ENCODE measurements at regions of chr17 and their contacts with region 1.

Region 1: DNA sequence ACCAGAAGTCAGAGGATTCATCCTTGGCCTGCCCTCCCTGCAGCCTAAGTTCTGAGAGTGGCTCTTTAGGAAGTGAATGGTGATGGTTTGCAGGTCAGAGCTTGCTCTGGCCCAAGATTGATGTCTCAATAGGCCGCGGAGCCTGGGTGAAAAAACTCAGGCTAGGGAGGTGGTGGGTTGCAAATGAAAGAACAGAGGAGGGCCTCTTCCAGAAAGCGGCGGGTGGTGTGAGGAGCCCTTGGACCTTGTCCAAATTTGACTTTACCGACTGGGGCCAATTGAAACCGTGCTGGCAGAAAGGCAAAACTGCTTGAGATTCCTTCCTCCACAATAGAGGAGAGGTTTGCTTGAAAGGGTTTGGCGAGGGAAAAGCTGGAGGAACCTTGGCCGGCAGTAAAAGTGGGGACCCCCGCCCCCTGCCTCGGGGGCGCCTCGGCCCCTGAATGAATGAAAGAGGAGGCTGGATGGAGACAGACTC is 331.3 kb downstream of the SEC14L1 start:
- DNase-seq: peak in 1 of 5 donors; percentile 34
- H3K4me3 ChIP-seq: peak overlapping the region; percentile 18 to 48
- H3K4me3 Mint-ChIP-seq: peak overlapping the region; percentile 43 to 91 (median 74)
- H3K27ac ChIP-seq: peak overlapping the region; percentile 51
- H3K27ac Mint-ChIP-seq: peak overlapping the region; percentile 82 to 98 (median 93)
- H3K4me1 ChIP-seq: peaks cover 100% of the 10 kb centered on the region
- H3K4me1 Mint-ChIP-seq: peaks cover 67 to 99% (median 90%) of the 10 kb centered on the region in 4 donors
- H3K27me3 ChIP-seq: no peaks in the 10 kb centered on the region
- H3K27me3 Mint-ChIP-seq: no peaks in the 10 kb centered on the region

Region 2: DNA sequence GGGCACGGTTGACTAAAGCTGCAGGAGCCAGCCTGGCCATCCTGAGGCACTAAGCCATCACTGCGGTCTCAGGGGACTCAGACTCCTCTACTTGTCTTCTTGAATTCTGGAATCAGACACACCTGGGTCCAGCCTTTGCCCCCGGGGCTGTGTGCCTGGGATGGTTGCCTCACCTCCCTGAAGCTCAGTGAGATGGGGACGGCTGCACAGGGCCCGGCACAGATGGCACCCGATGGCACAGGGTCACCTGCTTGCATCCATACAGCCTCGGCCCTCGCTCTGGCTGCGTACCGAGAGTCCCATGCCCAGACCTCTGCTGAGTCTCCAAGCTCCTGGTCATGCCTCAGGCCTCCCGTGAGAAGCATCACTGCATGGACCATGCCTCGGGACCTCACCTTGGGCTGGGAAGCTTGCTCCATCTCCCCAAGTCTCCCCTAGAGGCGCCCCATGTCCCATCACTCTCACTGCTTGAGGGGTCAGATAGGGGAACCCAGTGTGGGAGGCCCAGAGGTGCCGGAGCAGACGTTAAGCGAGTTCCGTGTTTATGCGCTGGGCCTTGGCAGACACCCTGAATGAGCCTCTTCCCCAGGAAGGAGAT is 15.0 kb before region 1 on chr17:
- CTCF ChIA-PET with region 1: interaction called, 6 read pairs
- POLR2A ChIA-PET with region 1: interaction called, 6,031 read pairs
- intact Hi-C with region 1: loop called (anchors 2 kb)
- DNase-seq: peak in 1 of 5 donors; percentile 64
- H3K4me3 ChIP-seq: peak overlapping the region; percentile 73 to 94
- H3K4me3 Mint-ChIP-seq: peak overlapping the region; percentile 90 to 100 (median 96)
- H3K27ac ChIP-seq: peak overlapping the region; percentile 73
- H3K27ac Mint-ChIP-seq: peak overlapping the region; percentile 90 to 100 (median 98)
- H3K4me1 ChIP-seq: peaks cover 74% of the 10 kb centered on the region
- H3K4me1 Mint-ChIP-seq: peaks cover 31 to 92% (median 55%) of the 10 kb centered on the region in 4 donors
- H3K27me3 ChIP-seq: no peaks in the 10 kb centered on the region
- H3K27me3 Mint-ChIP-seq: no peaks in the 10 kb centered on the region

Measured in CD4-positive, alpha-beta memory T cell (primary cell).